ENCODE measurements at regions of chr2 and their contacts with region 1.

Region 1: GRCh38 chr2:8539743-8540551 is 141.9 kb upstream of the ID2 start:
- DNase-seq: peak in 2 of 3 donors; percentile 50
- H3K4me3 ChIP-seq: no peak overlapping the region
- H3K4me3 Mint-ChIP-seq: peak overlapping the region; percentile 45 to 71
- H3K27ac ChIP-seq: peak overlapping the region; percentile 65 to 73
- H3K27ac Mint-ChIP-seq: peak overlapping the region; percentile 77 to 91 (median 87)
- H3K4me1 ChIP-seq: peaks cover 93 to 100% of the 10 kb centered on the region in 2 donors
- H3K4me1 Mint-ChIP-seq: peaks cover 93% of the 10 kb centered on the region
- H3K27me3 ChIP-seq: no peaks in the 10 kb centered on the region
- H3K27me3 Mint-ChIP-seq: peaks cover 0 to 2% (median 1%) of the 10 kb centered on the region in 3 donors
- CTCF ChIP-seq: no peak

Region 2: GRCh38 chr2:8469709-8470493 is 70.0 kb before region 1 on chr2:
- intact Hi-C with region 1: no loop called
- DNase-seq: no peak
- H3K4me3 ChIP-seq: no peak overlapping the region
- H3K4me3 Mint-ChIP-seq: no peak overlapping the region
- H3K27ac ChIP-seq: no peak overlapping the region
- H3K27ac Mint-ChIP-seq: no peak overlapping the region
- H3K4me1 ChIP-seq: peaks cover 46 to 55% of the 10 kb centered on the region in 2 donors
- H3K4me1 Mint-ChIP-seq: peaks cover 55% of the 10 kb centered on the region
- H3K27me3 ChIP-seq: no peaks in the 10 kb centered on the region
- H3K27me3 Mint-ChIP-seq: peaks cover 0 to 1% (median 0%) of the 10 kb centered on the region in 3 donors
- CTCF ChIP-seq: no peak

Region 3: DNA sequence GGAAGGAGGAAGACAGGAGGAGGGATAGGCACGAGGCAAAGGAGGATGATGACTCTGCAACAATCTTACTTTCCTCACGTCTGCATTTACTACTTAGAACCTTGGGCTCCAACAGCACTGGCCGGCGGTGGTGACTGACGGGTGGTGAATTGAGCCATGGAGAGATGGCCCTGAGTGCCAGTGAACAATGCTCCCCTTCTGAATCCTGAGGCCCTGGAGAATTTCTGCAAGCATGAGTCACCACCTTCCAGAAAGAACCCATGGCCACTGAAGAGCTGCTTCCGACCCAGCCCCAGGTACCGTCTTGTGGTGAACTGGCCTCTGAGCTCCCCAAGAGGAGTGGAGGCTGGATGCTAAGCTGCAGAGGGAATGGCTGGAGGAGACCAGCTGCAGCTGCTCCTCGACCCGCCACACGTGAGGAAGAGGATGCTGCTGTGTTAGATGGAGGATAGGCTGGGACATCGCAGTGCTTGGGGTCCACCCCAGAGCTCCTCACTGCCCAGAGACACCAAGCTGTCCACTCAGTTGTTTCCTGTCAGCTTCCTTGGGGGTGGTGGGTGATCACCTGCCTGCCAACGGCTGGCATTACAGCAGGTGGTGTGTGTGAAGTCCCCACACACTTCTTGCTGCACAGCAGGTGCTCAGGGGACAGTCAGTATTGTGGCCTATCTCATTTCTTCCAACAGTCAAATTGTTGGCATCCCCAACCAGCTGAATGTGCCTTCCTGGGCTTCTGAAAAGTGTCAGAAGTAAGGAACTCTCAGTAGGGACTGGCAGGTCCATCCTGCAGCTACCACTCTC is 44.6 kb before region 1 on chr2:
- intact Hi-C with region 1: loop called in 1 of 2 experiments (anchors 5 kb)
- DNase-seq: peak in 2 of 3 donors; percentile 23 to 40
- H3K4me3 ChIP-seq: no peak overlapping the region
- H3K4me3 Mint-ChIP-seq: no peak overlapping the region
- H3K27ac ChIP-seq: no peak overlapping the region
- H3K27ac Mint-ChIP-seq: peak overlapping the region in 1 of 7 donors; percentile 2
- H3K4me1 ChIP-seq: peaks cover 45 to 56% of the 10 kb centered on the region in 2 donors
- H3K4me1 Mint-ChIP-seq: peaks cover 58% of the 10 kb centered on the region
- H3K27me3 ChIP-seq: no peaks in the 10 kb centered on the region
- H3K27me3 Mint-ChIP-seq: peaks cover 1 to 5% (median 4%) of the 10 kb centered on the region in 3 donors
- CTCF ChIP-seq: no peak

Region 4: GRCh38 chr2:9675415-9676351 is 1135.7 kb after region 1 on chr2:
- intact Hi-C with region 1: no loop called
- DNase-seq: peak in 1 of 3 donors; percentile 31
- H3K4me3 ChIP-seq: no peak overlapping the region
- H3K4me3 Mint-ChIP-seq: no peak overlapping the region
- H3K27ac ChIP-seq: no peak overlapping the region
- H3K27ac Mint-ChIP-seq: no peak overlapping the region
- H3K4me1 ChIP-seq: peaks cover 2 to 10% of the 10 kb centered on the region in 2 donors
- H3K4me1 Mint-ChIP-seq: peaks cover 12% of the 10 kb centered on the region
- H3K27me3 ChIP-seq: no peaks in the 10 kb centered on the region
- H3K27me3 Mint-ChIP-seq: peaks cover 1 to 8% (median 4%) of the 10 kb centered on the region in 3 donors
- CTCF ChIP-seq: no peak

Measured in CD14-positive monocyte (primary cell).